Left colon (tissue), 2 donors: ENCODE measurements at regions of chr5 and their contacts with region 1.

Region 1: GRCh38 chr5:177390363-177391300 is 6.4 kb downstream of the SLC34A1 start:
- DNase-seq: peak; percentile 77 to 88
- ATAC-seq: peak; percentile 91

Region 2: GRCh38 chr5:176837707-176838115 is 552.9 kb before region 1 on chr5:
- intact Hi-C with region 1: no loop called
- DNase-seq: peak; percentile 80 to 94
- ATAC-seq: peak; percentile 95

Region 3: GRCh38 chr5:177500685-177501522 is 110.3 kb after region 1 on chr5:
- intact Hi-C with region 1: loop called in 1 of 2 experiments (anchors 5 kb)
- DNase-seq: peak; percentile 84 to 97
- ATAC-seq: peak; percentile 30